Prostate gland (tissue), 2 donors: ENCODE measurements at regions of chr15 and their contacts with region 1.

Region 1: GRCh38 chr15:88546248-88547129 is at the start of gene DET1:
- DNase-seq: peak; percentile 96
- H3K4me3 ChIP-seq: peak within 1 kb of the TSS; percentile 61 to 66
- H3K27ac ChIP-seq: peak within 1 kb of the TSS; percentile 78 to 81
- H3K4me1 ChIP-seq: no peaks in the 10 kb centered on the region
- H3K27me3 ChIP-seq: no peaks in the 10 kb centered on the region
- CTCF ChIP-seq: peak in 3 of 4 experiments; percentile 80 to 87 (median 81)
- POLR2A ChIP-seq: no peak
- total RNA-seq, gene DET1: 6.9 to 11.5 TPM

Region 2: DNA sequence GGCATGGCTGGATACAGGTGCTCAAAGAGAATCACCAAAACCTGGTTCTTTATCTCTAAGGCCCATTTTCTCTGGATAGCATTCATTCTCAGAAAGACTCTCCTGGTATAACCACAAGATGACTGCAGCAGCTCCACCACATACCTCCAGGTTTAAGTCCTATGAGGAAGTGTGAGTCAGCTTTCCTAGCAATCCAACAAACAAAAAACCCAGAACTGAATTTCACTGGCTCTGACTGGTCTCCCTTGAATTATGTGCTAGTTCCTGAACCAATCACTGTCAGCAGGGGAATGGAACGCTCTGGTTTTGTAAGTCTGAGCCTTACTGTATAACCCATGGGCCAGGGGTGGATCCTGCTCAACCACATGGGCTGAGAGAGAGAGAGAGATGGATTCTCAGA is 106.5 kb before region 1 on chr15:
- intact Hi-C with region 1: no loop called
- DNase-seq: no peak
- H3K4me3 ChIP-seq: no peak overlapping the region
- H3K27ac ChIP-seq: no peak overlapping the region
- H3K4me1 ChIP-seq: no peaks in the 10 kb centered on the region
- H3K27me3 ChIP-seq: no peaks in the 10 kb centered on the region
- CTCF ChIP-seq: no peak
- POLR2A ChIP-seq: no peak

Region 3: DNA sequence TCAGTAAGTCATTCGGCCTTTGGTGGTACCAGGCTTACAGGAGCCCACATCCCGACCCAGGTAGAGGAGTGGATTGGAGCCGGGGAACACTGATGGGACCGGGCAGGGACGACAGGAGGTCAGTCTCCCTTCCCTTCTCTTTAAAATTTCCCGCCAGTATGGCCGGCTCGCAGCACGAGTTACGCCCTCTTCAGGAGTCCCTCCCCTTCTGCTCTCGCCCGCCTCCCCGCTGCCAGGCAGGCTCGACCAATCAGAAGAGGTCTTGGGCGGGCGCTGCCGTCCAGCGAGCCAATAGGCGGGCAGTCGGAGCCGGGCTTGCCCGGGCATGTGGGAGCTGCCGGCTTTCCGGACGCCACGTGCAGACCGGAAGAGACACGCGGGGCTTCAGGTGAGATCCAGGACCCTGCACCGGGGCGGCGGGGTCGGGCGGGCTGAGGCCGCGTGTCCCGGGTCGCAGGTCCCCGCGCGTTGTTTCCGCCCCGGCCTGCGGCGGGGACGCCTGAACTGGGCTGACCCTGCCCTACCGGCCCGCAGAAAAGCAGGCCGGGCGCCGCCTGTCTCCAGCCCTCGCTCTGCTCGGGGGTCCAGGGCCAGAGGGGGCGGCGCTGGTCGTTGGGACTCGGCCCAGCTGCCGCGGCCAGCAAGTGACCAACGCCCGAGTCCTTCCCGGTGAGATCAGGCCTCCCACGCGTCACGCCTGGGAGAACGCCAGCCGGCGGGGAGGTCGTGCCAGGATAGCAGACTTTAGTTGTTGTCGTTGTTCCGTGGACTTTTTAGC is 74.7 kb after region 1 on chr15 and contains the start of gene AEN:
- intact Hi-C with region 1: loop called (anchors 10 kb)
- DNase-seq: peak; percentile 95
- H3K4me3 ChIP-seq: peak within 1 kb of the TSS; percentile 77 to 80
- H3K27ac ChIP-seq: peak within 1 kb of the TSS; percentile 64 to 65
- H3K4me1 ChIP-seq: peaks cover 6% of the 10 kb centered on the region
- H3K27me3 ChIP-seq: no peaks in the 10 kb centered on the region
- CTCF ChIP-seq: peak in 3 of 4 experiments; percentile 26 to 47 (median 37)
- POLR2A ChIP-seq: peak; percentile 34
- total RNA-seq, gene AEN: 20.4 to 30.4 TPM